ENCODE measurements at regions of chr4 and their contacts with region 1.

Region 1: GRCh38 chr4:101169044-101170014 is 178.0 kb downstream of the PPP3CA start:
- DNase-seq: peak; percentile 53 to 84
- H3K4me3 ChIP-seq: no peak overlapping the region
- H3K27ac ChIP-seq: no peak overlapping the region
- H3K4me1 ChIP-seq: peaks cover 7 to 47% (median 30%) of the 10 kb centered on the region in 4 donors
- H3K27me3 ChIP-seq: no peaks in the 10 kb centered on the region
- CTCF ChIP-seq: peak in 4 of 7 experiments; percentile 54 to 72 (median 72)
- EP300 ChIP-seq: no peak
- POLR2A ChIP-seq: no peak

Region 2: GRCh38 chr4:101282076-101282844 is 112.9 kb after region 1 on chr4:
- intact Hi-C with region 1: no loop called
- DNase-seq: peak in 1 of 2 donors; percentile 27
- H3K4me3 ChIP-seq: no peak overlapping the region
- H3K27ac ChIP-seq: no peak overlapping the region
- H3K4me1 ChIP-seq: peaks cover 14 to 82% (median 57%) of the 10 kb centered on the region in 4 donors
- H3K27me3 ChIP-seq: no peaks in the 10 kb centered on the region
- CTCF ChIP-seq: no peak
- EP300 ChIP-seq: no peak
- POLR2A ChIP-seq: no peak

Region 3: GRCh38 chr4:101724093-101724492 is 554.8 kb after region 1 on chr4:
- intact Hi-C with region 1: loop called (anchors 10 kb)
- DNase-seq: peak in 1 of 2 donors; percentile 2
- H3K4me3 ChIP-seq: no peak overlapping the region
- H3K27ac ChIP-seq: no peak overlapping the region
- H3K4me1 ChIP-seq: no peaks in the 10 kb centered on the region
- H3K27me3 ChIP-seq: no peaks in the 10 kb centered on the region
- CTCF ChIP-seq: no peak
- EP300 ChIP-seq: no peak
- POLR2A ChIP-seq: no peak

Measured in stomach (tissue), 19 donors.